ENCODE measurements at regions of chr7 and their contacts with region 1.

Region 1: GRCh38 chr7:68381731-68382130 is 1216.5 kb upstream of the AUTS2 start:
- DNase-seq: no peak
- H3K4me3 ChIP-seq: no peak overlapping the region
- H3K27ac ChIP-seq: no peak overlapping the region
- H3K4me1 ChIP-seq: no peaks in the 10 kb centered on the region
- H3K27me3 ChIP-seq: no peaks in the 10 kb centered on the region
- CTCF ChIP-seq: no peak
- EP300 ChIP-seq: no peak
- POLR2A ChIP-seq: no peak

Region 2: GRCh38 chr7:68348401-68348800 is 33.3 kb before region 1 on chr7:
- in situ Hi-C with region 1: no loop called
- intact Hi-C with region 1: loop called (anchors 1 kb)
- DNase-seq: no peak
- H3K4me3 ChIP-seq: no peak overlapping the region
- H3K27ac ChIP-seq: no peak overlapping the region
- H3K4me1 ChIP-seq: no peaks in the 10 kb centered on the region
- H3K27me3 ChIP-seq: no peaks in the 10 kb centered on the region
- CTCF ChIP-seq: no peak
- EP300 ChIP-seq: no peak
- POLR2A ChIP-seq: no peak

Region 3: GRCh38 chr7:68364886-68365625 is 16.7 kb before region 1 on chr7:
- in situ Hi-C with region 1: no loop called
- intact Hi-C with region 1: loop called (anchors 1 kb)
- DNase-seq: no peak
- H3K4me3 ChIP-seq: no peak overlapping the region
- H3K27ac ChIP-seq: no peak overlapping the region
- H3K4me1 ChIP-seq: no peaks in the 10 kb centered on the region
- H3K27me3 ChIP-seq: no peaks in the 10 kb centered on the region
- CTCF ChIP-seq: no peak
- EP300 ChIP-seq: no peak
- POLR2A ChIP-seq: no peak

Region 4: DNA sequence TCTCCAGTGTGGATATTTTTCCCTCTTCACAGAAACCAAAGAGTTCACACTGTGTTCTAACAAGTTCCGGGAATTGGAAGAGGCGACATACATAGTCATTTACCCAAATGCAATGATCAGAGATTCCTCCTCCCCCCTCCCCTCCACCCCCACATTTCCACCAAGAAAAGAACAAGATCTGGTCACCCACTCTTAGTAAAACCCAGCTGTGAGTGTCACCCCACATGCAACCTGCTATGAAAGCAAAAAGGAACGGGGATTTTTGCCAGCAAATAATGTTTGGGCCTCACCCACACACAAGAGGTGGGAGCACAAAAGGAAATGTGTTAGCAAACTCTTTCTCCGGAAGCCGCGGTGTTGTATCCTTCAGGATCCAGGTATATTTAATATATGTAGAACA is 471.5 kb after region 1 on chr7:
- in situ Hi-C with region 1: no loop called
- intact Hi-C with region 1: no loop called
- DNase-seq: no peak
- H3K4me3 ChIP-seq: no peak overlapping the region
- H3K27ac ChIP-seq: no peak overlapping the region
- H3K4me1 ChIP-seq: no peaks in the 10 kb centered on the region
- H3K27me3 ChIP-seq: no peaks in the 10 kb centered on the region
- CTCF ChIP-seq: no peak
- EP300 ChIP-seq: no peak
- POLR2A ChIP-seq: no peak

Measured in transverse colon (tissue), 4 donors.